K562 (cell line): ENCODE measurements at regions of chr2 and their contacts with region 1.

Region 1: DNA sequence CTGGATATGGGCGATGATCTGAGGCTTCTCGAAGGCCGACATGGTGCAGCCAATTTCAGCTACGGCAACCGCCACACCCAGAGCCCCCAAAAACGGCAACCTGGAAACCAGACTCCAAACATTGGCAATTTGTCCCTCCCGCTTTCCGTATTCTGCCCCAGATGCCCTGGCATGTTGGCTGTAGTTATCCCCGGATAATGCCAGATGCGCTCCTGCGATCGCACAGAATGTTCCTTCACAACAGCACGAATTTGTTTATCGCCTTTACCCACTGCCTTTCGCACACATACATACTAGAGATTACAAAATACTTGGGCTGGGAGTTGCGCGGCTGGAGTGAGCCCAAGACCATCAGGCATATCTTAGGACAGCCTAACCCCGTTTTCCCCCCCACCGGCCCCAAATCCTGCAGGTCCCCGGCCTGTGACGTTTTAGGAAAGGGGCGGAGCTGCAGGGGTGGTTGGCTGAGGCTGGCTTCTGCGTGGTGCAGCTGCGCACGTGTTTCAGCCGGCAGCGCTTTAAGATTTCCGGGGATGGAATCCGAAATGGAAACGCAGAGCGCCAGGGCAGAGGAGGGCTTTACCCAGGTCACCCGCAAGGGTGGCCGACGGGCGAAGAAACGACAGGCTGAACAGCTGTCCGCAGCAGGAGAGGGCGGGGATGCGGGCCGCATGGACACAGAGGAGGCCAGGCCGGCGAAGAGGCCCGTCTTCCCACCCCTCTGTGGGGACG is at the start of gene PNO1:
- DNase-seq: peak; percentile 96 to 98 (median 98)
- ATAC-seq: peak; percentile 94
- H3K4me3 ChIP-seq: peak within 1 kb of the TSS; percentile 71
- H3K27ac ChIP-seq: peak within 1 kb of the TSS; percentile 98
- H3K4me1 ChIP-seq: peaks cover 2 to 13% of the 10 kb centered on the region in 2 experiments; a peak in 2 of 5 replicates
- H3K27me3 ChIP-seq: no peaks in the 10 kb centered on the region
- CTCF ChIP-seq: peak in 1 of 3 experiments; percentile 2; a peak in 1 of 6 replicates
- EP300 ChIP-seq: peak; percentile 48
- POLR2A ChIP-seq: peak; percentile 82
- RAD21 ChIP-seq: no peak
- polyA plus RNA-seq, gene PNO1: 11.8 to 18.6 TPM

Region 2: GRCh38 chr2:68134554-68134953 is 23.0 kb before region 1 on chr2:
- CTCF ChIA-PET with region 1: no interaction called
- POLR2A ChIA-PET with region 1: interaction called, 7 read pairs
- in situ Hi-C with region 1: no loop called
- intact Hi-C with region 1: loop called (anchors 2 kb)
- DNase-seq: peak in 3 of 4 experiments; percentile 23 to 57 (median 27)
- ATAC-seq: peak; percentile 80
- H3K4me3 ChIP-seq: no peak overlapping the region
- H3K27ac ChIP-seq: no peak overlapping the region
- H3K4me1 ChIP-seq: peaks cover 7 to 25% of the 10 kb centered on the region in 2 experiments; a peak in 4 of 5 replicates
- H3K27me3 ChIP-seq: no peaks in the 10 kb centered on the region
- CTCF ChIP-seq: peak; percentile 27 to 35 (median 29); a peak in 4 of 6 replicates
- EP300 ChIP-seq: no peak
- POLR2A ChIP-seq: no peak
- RAD21 ChIP-seq: 0 out of 4 replicates have a peak, but pooled peaks have one; percentile 5 to 7